ENCODE measurements at regions of chr17 and their contacts with region 1.

Region 1: DNA sequence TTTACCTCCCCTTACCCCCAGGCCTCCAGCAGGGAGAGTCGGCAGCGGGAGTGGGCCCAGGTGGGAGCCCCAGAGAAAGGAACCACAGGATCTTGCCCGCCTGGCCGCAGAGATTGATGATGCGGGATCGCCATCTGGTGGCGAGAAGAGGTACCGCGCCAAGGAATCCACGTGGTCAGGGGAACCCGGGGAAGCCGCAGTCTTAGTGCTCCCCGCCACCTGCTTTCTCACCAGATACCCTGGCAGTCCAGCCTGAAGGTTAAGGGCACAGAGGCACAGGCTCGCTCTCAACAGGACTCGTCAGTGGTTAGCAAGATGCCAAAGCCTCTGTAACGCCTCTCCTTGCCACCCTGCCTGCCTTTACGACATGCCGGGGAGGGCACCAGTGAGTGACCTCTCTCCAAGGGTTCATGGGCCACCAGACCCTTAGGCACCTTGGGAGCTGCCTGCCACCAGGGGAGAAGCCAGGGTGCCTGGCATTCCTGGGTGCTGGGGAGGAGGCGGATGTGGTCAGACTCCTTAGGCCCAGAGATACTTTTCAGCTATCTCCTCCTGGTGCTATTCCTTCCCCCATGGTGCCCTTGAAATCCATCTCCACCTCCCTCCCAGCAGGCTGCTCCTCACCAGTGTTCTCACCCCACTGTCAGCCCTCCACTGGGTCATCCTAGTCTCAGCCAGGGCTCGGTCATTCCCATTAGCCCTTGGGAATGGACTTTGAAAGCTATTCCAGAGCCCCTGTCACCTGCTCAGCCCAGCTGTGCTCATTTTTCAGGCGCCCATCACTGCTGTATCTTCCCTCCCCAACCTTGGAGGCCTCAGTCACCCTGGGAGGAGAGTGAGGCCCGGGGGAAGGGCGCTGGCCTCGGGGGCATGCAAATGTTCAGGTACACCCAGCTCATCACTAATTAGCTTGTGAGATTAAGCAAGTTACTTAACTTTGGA is 5.5 kb upstream of the RHBDF2 start:
- DNase-seq: peak; percentile 77 to 97
- H3K4me3 ChIP-seq: no peak overlapping the region
- CTCF ChIP-seq: peak in 2 of 3 donors; percentile 61 to 96
- POLR2A ChIP-seq: no peak

Region 2: DNA sequence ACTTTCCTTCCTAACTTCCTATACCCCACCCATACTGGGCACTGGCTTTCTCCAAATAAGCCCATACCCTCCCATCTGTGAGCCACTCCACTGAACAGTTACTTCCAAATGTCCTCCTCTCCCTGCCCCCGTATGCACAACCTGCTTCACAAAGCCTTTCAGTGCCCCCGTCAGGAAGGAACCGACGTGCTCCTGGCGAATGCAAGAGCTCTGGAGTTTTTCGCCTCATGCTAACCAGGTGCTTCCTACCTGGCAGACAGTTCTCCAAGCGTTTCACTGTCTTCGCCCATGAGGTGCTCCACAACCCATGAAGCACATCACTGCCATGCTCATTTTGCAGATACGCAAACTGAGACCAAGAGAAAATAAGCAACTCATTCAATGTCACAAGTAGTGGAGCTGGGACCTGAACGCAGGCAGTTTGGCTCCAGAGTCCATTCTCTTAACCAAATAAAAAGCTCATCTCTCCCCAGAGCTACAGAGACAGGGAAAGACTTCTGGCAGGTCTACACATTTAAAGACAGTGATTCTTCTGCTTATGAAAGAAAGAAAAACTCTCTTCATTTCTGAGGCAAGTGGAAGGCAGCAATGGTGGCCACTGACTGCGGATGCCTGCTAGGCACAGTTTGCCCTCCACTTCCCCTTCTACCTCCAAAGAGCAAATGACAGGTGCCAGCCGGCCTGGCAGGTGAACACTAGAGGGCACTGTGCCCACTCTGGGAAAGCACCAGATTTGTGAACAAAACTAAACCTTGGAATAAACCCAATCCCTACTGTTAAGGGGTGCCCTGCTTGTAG is 98.4 kb before region 1 on chr17:
- intact Hi-C with region 1: loop called (anchors 5 kb)
- DNase-seq: peak in 1 of 2 donors; percentile 87
- H3K4me3 ChIP-seq: no peak overlapping the region
- CTCF ChIP-seq: no peak
- POLR2A ChIP-seq: no peak

Region 3: DNA sequence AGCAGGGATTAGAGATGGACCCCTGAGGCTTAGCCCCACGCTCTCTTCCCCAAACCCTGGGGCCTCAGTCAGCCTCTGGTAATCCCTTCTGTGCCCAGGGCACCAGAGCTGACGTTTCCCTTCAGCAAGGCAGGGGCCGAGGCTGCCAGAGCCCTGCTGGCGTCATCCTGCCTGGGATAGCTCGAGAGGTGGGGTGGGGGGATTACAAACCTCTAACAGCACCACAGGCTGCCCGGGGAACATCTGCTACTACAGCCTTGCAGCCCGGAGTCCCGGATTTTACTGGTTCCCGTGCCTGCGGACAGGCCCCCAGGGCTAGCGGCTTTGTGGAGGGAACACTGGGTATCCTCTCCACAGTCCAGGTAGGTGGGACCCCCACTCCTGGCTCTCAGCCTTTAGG is 39.3 kb before region 1 on chr17 and contains the start of gene AANAT:
- intact Hi-C with region 1: loop called (anchors 2 kb)
- DNase-seq: no peak
- H3K4me3 ChIP-seq: no peak within 1 kb of the TSS
- CTCF ChIP-seq: no peak
- POLR2A ChIP-seq: no peak
- total RNA-seq, gene AANAT: not detected

Region 4: GRCh38 chr17:76481071-76481655 is 25.5 kb before region 1 on chr17:
- intact Hi-C with region 1: no loop called
- DNase-seq: no peak
- H3K4me3 ChIP-seq: no peak overlapping the region
- CTCF ChIP-seq: no peak
- POLR2A ChIP-seq: no peak

Region 5: GRCh38 chr17:76643553-76644148 is 137.0 kb after region 1 on chr17 and contains the start of gene ST6GALNAC1:
- intact Hi-C with region 1: no loop called
- DNase-seq: peak in 1 of 2 donors; percentile 69
- H3K4me3 ChIP-seq: no peak within 1 kb of the TSS
- CTCF ChIP-seq: no peak
- POLR2A ChIP-seq: no peak
- total RNA-seq, gene ST6GALNAC1: 2.4 to 5.6 TPM in 2 of 4 donors, not detected in the others

Measured in lower leg skin (tissue), 4 donors.